HCT116 (cell line): ENCODE measurements at regions of chr18 and their contacts with region 1.

Region 1: DNA sequence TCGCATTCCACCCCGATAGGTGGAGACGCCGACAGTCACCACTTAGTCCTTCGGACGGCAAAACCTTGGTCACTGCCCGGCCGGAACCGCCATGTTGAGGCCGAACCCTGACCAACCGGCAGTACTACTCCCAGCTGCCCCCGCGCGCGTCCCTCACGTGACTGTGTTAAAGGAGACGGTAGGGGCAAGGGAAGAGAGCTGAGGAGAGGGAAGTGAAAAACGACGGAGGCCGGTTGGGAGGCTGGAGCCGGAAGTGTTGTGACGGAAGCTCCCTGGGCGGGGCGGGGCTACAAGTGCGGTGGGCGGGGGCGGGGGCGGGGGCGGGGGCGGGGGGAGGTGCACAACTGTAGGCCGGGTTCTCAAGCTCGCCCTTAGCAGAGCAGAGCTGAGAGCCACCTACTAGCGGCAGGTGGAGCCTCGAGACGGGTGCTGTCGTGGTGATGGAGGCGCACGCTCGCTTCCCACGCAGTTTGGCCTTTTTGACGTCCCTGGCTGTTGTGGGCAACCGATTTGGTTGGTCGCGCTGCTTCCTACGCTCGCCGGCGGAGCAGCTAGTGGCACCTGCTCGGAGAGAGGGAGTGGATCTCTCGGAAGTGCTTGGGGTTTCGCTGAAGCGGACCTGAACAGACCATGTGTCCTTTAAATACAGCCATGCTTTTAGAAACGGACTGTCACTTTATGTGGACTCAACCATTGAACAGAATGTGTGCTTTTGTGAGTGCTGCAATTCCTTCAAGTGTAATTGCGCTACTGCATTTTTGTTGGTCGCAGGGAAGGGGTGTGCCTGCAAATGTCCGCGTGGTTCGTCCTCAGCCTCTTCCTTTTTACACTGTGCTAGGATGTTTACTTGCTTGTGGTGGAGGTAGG is at the start of gene TRAPPC8:
- DNase-seq: peak; percentile 96
- ATAC-seq: peak; percentile 92
- H3K4me3 ChIP-seq: peak within 1 kb of the TSS; percentile 91 to 96
- H3K27ac ChIP-seq: peak within 1 kb of the TSS; percentile 78
- H3K4me1 ChIP-seq: peaks cover 16 to 24% of the 10 kb centered on the region in 2 experiments
- H3K27me3 ChIP-seq: no peaks in the 10 kb centered on the region
- CTCF ChIP-seq: no peak
- POLR2A ChIP-seq: peak; percentile 73
- RAD21 ChIP-seq: peak; percentile 14; the same call in 1 of the 2 replicates
- total RNA-seq, gene TRAPPC8: 30.4 TPM

Region 2: GRCh38 chr18:32018331-32019250 is 75.4 kb after region 1 on chr18 and contains the start of gene RNF125:
- CTCF ChIA-PET with region 1: no interaction called
- POLR2A ChIA-PET with region 1: interaction called, 4 read pairs
- RAD21 ChIA-PET with region 1: interaction called in 1 of 2 experiments, 3 read pairs
- intact Hi-C with region 1: loop called (anchors 5 kb)
- DNase-seq: peak; percentile 87
- ATAC-seq: peak; percentile 87
- H3K4me3 ChIP-seq: peak within 1 kb of the TSS; percentile 69 to 78
- H3K27ac ChIP-seq: peak within 1 kb of the TSS; percentile 86
- H3K4me1 ChIP-seq: peaks cover 12 to 36% of the 10 kb centered on the region in 2 experiments
- H3K27me3 ChIP-seq: no peaks in the 10 kb centered on the region
- CTCF ChIP-seq: no peak
- POLR2A ChIP-seq: no peak
- RAD21 ChIP-seq: peak; percentile 23; the same call in 1 of the 2 replicates
- total RNA-seq, gene RNF125: 7.4 TPM

Region 3: DNA sequence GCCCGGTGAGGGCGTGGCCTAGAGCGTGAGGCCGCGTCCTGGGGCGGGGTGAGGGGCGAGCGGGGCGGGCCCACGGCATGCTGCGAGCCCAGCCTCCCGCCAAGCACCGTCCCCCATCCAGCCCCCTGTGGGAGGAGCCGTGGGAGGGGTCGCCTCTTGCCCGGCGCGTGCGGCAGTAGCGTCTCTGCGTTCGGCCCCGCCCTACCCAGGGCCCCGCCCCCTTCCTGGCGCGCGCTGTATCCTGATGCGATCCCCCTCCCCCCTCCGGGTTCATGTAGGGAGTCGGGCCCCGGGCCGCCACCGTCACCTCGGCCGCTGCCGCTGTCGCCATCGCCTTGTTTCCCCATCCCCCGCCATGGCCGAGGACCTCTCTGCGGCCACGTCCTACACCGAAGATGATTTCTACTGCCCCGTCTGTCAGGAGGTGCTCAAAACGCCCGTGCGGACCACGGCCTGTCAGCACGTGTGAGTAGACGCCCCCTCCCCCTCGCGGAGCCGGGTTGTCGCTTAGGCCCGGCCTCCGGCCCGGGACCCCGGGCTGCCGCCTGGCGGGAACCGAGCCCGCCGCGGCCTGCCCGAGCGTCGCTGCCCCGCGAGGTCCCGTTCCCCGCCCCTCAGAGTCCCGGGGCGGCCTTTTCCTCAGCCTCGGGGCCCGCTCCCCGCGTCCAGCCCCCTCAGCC is 149.3 kb after region 1 on chr18:
- CTCF ChIA-PET with region 1: no interaction called
- POLR2A ChIA-PET with region 1: interaction called, 3 read pairs
- RAD21 ChIA-PET with region 1: no interaction called
- intact Hi-C with region 1: loop called (anchors 2 kb)
- DNase-seq: peak; percentile 88
- ATAC-seq: peak; percentile 93
- H3K4me3 ChIP-seq: peak overlapping the region; percentile 70 to 81
- H3K27ac ChIP-seq: peak overlapping the region; percentile 100
- H3K4me1 ChIP-seq: peaks cover 19 to 38% of the 10 kb centered on the region in 2 experiments
- H3K27me3 ChIP-seq: no peaks in the 10 kb centered on the region
- CTCF ChIP-seq: no peak
- POLR2A ChIP-seq: peak; percentile 33
- RAD21 ChIP-seq: no peak

Region 4: DNA sequence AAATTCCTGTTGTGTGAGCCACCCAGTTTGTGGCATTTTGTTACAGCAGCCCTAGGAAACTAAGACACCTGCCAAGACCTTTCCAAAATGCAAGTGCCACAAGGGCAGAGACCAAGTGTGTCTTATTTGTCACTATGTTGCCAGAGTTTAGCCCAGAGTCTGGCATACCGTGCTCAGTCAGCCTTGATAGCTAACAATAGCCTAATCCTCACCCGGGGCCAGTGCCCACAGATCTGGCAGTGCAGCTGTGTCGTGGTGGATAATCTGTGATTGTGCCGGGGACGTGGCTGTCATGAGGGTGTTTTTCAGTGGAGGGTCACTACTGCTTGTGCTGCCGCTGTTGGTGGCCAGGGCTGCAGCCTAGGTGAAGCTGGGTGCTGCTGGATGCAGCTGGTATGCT is 300.1 kb after region 1 on chr18:
- CTCF ChIA-PET with region 1: no interaction called
- POLR2A ChIA-PET with region 1: no interaction called
- RAD21 ChIA-PET with region 1: no interaction called
- intact Hi-C with region 1: no loop called
- DNase-seq: no peak
- ATAC-seq: no peak
- H3K4me3 ChIP-seq: no peak overlapping the region
- H3K27ac ChIP-seq: no peak overlapping the region
- H3K4me1 ChIP-seq: no peaks in the 10 kb centered on the region
- H3K27me3 ChIP-seq: peaks cover 4% of the 10 kb centered on the region; the same call in 1 of the 2 replicates
- CTCF ChIP-seq: no peak
- POLR2A ChIP-seq: no peak
- RAD21 ChIP-seq: no peak